PC-9 (cell line): ENCODE measurements at regions of chr14 and their contacts with region 1.

Region 1: DNA sequence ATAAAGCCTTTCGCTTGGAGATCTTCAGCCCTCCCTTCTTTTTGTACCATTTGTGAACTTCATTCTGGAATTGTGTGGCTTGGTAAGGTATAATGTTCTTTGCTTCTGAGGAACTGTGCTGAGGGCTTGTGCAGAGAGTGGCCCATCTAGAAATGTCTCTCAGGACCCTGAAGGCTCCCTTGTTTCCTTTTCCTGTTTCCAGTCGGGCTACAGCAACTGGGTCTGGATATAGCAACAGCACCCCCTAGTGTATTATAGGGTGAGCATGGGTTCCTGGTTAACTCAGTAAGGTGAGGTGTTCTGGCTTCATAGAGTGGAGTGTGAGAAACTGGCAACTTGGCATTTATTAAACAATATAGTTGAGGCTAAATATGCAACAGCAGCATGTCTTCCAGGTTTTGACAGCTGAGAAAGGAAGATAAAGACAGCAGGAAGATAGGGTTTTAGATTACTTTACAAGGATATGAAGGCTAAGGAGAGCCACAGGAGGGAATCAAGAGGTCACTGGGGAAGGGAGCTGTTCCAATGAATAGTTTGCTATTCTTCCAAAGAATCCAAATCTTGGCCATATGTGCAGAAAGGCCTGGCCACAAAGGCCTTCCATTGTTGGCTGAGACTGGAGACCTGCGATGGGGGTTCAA is 49.1 kb upstream of the RNU6-8 start:
- DNase-seq: peak; percentile 31 to 50
- H3K4me3 ChIP-seq: no peak overlapping the region
- H3K27ac ChIP-seq: no peak overlapping the region
- H3K4me1 ChIP-seq: peaks cover 3% of the 10 kb centered on the region; the same call in 1 of the 2 replicates
- H3K27me3 ChIP-seq: no peaks in the 10 kb centered on the region
- CTCF ChIP-seq: peak; percentile 74

Region 2: DNA sequence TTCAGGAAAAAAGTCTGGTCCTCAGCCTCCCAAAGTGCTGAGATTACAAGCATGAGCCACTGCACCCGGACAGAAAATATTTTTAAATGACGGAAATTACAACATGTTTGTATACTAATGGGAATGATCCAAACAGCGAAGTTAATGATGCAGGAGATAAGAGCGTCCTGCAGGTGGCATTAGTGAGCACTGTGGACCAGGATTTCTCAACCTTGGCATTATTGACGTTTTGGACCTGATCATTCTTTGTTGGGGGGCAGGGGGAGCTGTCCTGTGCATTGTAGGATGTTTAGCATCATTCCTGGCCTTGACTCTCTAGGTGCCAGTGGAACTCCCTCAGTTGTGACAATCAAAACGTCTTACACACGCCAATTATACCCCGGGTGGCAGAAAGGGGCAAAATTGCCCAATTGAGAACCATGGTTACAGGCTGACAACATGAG is 1595.9 kb before region 1 on chr14:
- CTCF ChIA-PET with region 1: no interaction called
- POLR2A ChIA-PET with region 1: no interaction called
- intact Hi-C with region 1: loop called (anchors 10 kb)
- DNase-seq: peak in 1 of 2 experiments; percentile 3
- H3K4me3 ChIP-seq: no peak overlapping the region
- H3K27ac ChIP-seq: no peak overlapping the region
- H3K4me1 ChIP-seq: no peaks in the 10 kb centered on the region
- H3K27me3 ChIP-seq: no peaks in the 10 kb centered on the region
- CTCF ChIP-seq: peak; percentile 57

Region 3: GRCh38 chr14:31456841-31457664 is 795.1 kb before region 1 on chr14 and contains the start of gene DTD2:
- CTCF ChIA-PET with region 1: no interaction called
- POLR2A ChIA-PET with region 1: no interaction called
- intact Hi-C with region 1: loop called (anchors 10 kb)
- DNase-seq: peak; percentile 81 to 86
- H3K4me3 ChIP-seq: peak within 1 kb of the TSS; percentile 62
- H3K27ac ChIP-seq: peak within 1 kb of the TSS; percentile 68
- H3K4me1 ChIP-seq: peaks cover 13% of the 10 kb centered on the region; the same call in 1 of the 2 replicates
- H3K27me3 ChIP-seq: no peaks in the 10 kb centered on the region
- CTCF ChIP-seq: no peak
- total RNA-seq, gene DTD2: 9.5 and 10.1 TPM in 2 replicates

Region 4: GRCh38 chr14:31937721-31938346 is 314.3 kb before region 1 on chr14:
- CTCF ChIA-PET with region 1: no interaction called
- POLR2A ChIA-PET with region 1: no interaction called
- intact Hi-C with region 1: loop called (anchors 2 kb)
- DNase-seq: peak; percentile 64 to 89
- H3K4me3 ChIP-seq: no peak overlapping the region
- H3K27ac ChIP-seq: peak overlapping the region; percentile 91
- H3K4me1 ChIP-seq: peaks cover 14% of the 10 kb centered on the region
- H3K27me3 ChIP-seq: no peaks in the 10 kb centered on the region
- CTCF ChIP-seq: no peak

Region 5: DNA sequence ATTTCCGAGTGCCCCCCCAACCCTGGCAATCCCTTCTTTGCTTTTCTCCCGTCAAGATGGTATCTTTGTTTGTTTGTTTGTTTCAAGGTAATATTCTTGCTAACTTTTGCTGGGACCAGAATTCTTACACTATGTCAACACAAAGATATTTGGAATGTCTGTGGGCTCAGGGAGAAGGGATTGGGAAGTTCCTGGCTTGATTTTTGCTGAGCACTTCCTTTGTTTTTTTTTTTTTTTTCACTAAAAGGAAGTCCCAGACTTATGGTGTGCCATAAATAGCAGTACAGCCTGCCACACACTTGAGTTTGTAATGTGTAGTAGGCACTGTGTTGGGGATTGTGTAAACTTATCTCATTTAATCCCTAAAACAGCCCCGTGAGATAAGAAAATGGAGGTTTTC is 61.5 kb before region 1 on chr14:
- CTCF ChIA-PET with region 1: no interaction called
- POLR2A ChIA-PET with region 1: no interaction called
- intact Hi-C with region 1: no loop called
- DNase-seq: no peak
- H3K4me3 ChIP-seq: no peak overlapping the region
- H3K27ac ChIP-seq: no peak overlapping the region
- H3K4me1 ChIP-seq: no peaks in the 10 kb centered on the region
- H3K27me3 ChIP-seq: no peaks in the 10 kb centered on the region
- CTCF ChIP-seq: no peak

Region 6: DNA sequence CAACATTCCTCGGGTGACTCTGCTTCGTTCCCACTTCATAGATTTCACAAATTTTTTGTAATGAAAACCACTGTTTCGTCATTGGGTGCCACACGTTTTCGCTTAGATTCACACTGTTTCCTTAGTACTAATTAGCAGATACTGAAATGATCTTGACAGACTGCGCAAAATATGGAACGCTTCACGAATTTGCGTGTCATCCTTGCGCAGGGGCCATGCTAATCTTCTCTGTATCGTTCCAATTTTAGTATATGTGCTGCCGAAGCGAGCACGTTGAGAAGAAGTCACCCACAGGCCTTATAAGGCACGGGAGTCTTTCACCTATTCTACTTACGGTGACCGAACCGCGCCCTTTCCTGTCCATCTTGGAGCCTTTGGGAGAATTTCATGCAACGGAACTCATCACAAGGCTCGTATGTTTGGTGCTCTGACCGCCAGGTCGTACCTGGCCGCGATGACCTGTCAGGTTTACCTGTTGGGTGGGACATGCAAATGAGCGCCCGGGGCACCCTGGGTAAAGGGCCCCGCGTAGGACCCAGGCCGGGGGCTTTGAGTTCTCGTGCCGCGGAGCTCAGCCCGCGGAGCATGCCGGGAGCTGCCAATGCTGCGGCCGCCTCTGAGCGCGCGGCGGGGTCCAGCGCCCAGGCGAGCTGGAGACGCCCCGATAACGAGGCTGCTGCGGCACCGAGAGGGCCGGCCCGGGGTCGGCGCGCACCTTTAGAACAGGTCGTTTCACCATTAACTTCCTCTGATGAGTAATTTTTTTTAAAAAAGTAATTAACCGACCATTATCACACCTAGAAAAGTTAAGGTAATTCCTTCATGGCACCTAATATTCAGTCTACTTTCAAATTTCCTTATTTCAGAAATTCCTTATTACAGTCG is 48.9 kb before region 1 on chr14 and contains the start of gene RNU6-8:
- CTCF ChIA-PET with region 1: no interaction called
- POLR2A ChIA-PET with region 1: interaction called, 6 read pairs
- intact Hi-C with region 1: loop called (anchors 1 kb)
- DNase-seq: peak; percentile 71 to 82
- H3K4me3 ChIP-seq: peak within 1 kb of the TSS; percentile 88
- H3K27ac ChIP-seq: peak within 1 kb of the TSS; percentile 86
- H3K4me1 ChIP-seq: peaks cover 13% of the 10 kb centered on the region; the same call in 1 of the 2 replicates
- H3K27me3 ChIP-seq: no peaks in the 10 kb centered on the region
- CTCF ChIP-seq: no peak
- total RNA-seq, gene RNU6-8: not detected in 2 replicates

Region 7: DNA sequence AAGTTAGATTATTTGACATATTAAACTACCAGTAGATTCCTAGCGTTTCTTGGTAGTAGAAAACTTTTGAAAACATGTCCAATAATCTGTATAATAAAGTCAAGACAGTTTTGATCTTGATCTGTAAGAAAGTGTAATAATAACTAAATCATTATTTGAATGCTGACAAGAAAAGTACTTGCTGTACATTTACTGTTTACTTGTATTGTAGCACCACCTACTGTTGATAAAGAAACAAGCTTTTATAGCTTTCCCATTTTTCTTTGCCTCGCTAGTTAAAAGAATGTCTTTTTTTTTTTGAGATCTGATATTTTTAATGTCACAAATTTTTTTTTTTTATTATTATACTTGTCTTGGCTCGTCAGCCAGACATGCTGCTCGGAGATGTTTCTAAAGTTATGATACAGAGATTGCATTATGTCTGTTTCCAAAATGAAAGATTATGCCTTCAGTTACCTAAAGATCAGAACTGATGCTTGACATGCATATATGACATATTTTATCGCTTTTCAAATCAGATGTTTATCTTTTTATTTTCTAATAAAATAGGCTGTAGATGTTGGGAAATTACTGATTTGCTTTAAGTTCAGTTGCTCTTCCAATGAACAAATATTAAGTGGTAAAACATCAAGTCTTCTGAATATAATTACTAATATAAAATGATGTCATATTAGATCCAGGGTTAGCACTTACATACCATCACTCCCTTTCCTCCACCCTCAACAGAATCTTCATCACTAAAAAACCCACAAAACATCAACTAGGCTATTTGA is 217.4 kb after region 1 on chr14:
- CTCF ChIA-PET with region 1: no interaction called
- POLR2A ChIA-PET with region 1: no interaction called
- intact Hi-C with region 1: loop called (anchors 1 kb)
- DNase-seq: peak in 1 of 2 experiments; percentile 48
- H3K4me3 ChIP-seq: no peak overlapping the region
- H3K27ac ChIP-seq: peak overlapping the region; percentile 71
- H3K4me1 ChIP-seq: peaks cover 46% of the 10 kb centered on the region
- H3K27me3 ChIP-seq: no peaks in the 10 kb centered on the region
- CTCF ChIP-seq: peak; percentile 74

Region 8: GRCh38 chr14:32560209-32560857 is 308.2 kb after region 1 on chr14:
- CTCF ChIA-PET with region 1: no interaction called
- POLR2A ChIA-PET with region 1: no interaction called
- intact Hi-C with region 1: loop called (anchors 2 kb)
- DNase-seq: peak; percentile 45 to 47
- H3K4me3 ChIP-seq: no peak overlapping the region
- H3K27ac ChIP-seq: no peak overlapping the region
- H3K4me1 ChIP-seq: no peaks in the 10 kb centered on the region
- H3K27me3 ChIP-seq: no peaks in the 10 kb centered on the region
- CTCF ChIP-seq: peak; percentile 90